ENCODE measurements at regions of chr3 and their contacts with region 1.

Region 1: DNA sequence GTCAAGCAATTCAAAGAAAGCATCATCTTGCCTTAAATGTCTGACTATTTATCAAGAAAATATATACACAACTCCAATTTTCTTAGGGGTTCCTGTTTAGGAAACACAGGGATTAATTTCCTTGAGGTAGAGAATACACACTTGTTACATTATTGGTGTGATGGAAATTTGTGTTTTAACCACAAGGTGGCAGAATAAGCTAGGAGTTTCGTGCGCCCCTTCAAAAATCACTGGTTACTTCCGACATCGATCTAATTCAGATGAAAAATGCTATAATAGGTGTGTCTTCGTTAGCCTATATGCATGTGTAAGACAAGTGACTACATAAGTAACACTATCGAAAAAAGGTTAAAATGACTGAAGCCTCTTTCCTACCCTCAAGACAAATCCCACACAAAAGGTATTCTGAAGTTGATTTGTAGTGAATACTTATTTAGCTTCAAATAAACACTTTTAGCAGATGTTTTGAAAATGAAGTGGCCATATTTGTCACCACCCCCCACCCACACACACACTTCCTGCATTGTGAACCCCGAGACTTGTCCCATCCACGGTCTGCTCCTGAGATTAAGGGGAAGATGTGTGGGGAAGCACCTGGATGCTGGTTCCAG is 246.5 kb downstream of the ROBO1 start:
- DNase-seq: peak; percentile 7
- ATAC-seq: peak; percentile 23
- H3K4me3 Mint-ChIP-seq: no peak overlapping the region
- H3K27ac Mint-ChIP-seq: no peak overlapping the region
- H3K4me1 Mint-ChIP-seq: no peaks in the 10 kb centered on the region
- H3K27me3 Mint-ChIP-seq: no peaks in the 10 kb centered on the region

Region 2: GRCh38 chr3:79810581-79810980 is 289.2 kb after region 1 on chr3:
- CTCF ChIA-PET with region 1: no interaction called
- POLR2A ChIA-PET with region 1: no interaction called
- intact Hi-C with region 1: no loop called
- DNase-seq: no peak
- ATAC-seq: no peak
- H3K4me3 Mint-ChIP-seq: no peak overlapping the region
- H3K27ac Mint-ChIP-seq: no peak overlapping the region
- H3K4me1 Mint-ChIP-seq: no peaks in the 10 kb centered on the region
- H3K27me3 Mint-ChIP-seq: no peaks in the 10 kb centered on the region

Region 3: GRCh38 chr3:79822076-79822475 is 300.7 kb after region 1 on chr3:
- CTCF ChIA-PET with region 1: no interaction called
- POLR2A ChIA-PET with region 1: no interaction called
- intact Hi-C with region 1: no loop called
- DNase-seq: no peak
- ATAC-seq: no peak
- H3K4me3 Mint-ChIP-seq: no peak overlapping the region
- H3K27ac Mint-ChIP-seq: no peak overlapping the region
- H3K4me1 Mint-ChIP-seq: no peaks in the 10 kb centered on the region
- H3K27me3 Mint-ChIP-seq: no peaks in the 10 kb centered on the region

Region 4: DNA sequence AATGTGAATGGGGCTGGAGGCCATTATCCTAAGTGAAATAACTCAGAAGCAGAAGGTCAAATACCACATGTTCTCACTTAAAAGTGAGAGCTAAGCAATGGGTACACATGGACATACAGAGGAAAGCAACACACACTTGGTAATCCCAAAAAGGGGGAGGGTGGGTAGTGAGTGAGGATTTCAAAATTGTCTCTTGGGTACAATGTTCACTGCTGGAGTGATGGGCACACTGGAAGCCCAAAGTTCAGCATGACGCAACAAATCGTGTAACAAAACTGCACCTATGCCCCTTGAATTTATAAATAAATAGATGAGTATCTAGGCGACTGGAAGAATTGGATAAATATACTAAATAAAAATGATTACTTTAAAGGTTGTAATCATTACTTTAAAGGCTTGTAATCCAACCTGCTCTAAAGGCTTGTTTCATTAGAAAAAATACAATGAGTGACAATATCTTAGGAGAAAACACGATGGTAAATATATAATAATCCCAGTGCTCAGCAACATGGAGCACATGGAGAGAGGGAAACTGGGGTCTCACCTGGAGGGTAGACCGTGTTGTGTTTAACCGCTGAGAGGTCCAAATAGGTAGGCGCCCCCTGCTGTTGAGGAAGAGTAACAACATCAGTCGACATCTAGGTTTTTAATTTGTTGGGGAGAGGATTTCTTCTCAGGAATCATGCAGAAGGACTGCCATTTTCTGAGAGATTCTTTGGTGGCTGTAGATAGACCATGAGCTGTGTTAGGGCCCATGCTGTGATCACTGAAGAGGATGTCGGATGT is 325.0 kb after region 1 on chr3:
- CTCF ChIA-PET with region 1: no interaction called
- POLR2A ChIA-PET with region 1: no interaction called
- intact Hi-C with region 1: loop called in 1 of 2 experiments (anchors 1 kb)
- DNase-seq: peak; percentile 24
- ATAC-seq: no peak
- H3K4me3 Mint-ChIP-seq: no peak overlapping the region
- H3K27ac Mint-ChIP-seq: no peak overlapping the region
- H3K4me1 Mint-ChIP-seq: no peaks in the 10 kb centered on the region
- H3K27me3 Mint-ChIP-seq: no peaks in the 10 kb centered on the region

Region 5: GRCh38 chr3:81242871-81243270 is 1721.5 kb after region 1 on chr3:
- CTCF ChIA-PET with region 1: no interaction called
- POLR2A ChIA-PET with region 1: no interaction called
- intact Hi-C with region 1: loop called in 1 of 2 experiments (anchors 5 kb)
- DNase-seq: no peak
- ATAC-seq: no peak
- H3K4me3 Mint-ChIP-seq: no peak overlapping the region
- H3K27ac Mint-ChIP-seq: no peak overlapping the region
- H3K4me1 Mint-ChIP-seq: no peaks in the 10 kb centered on the region
- H3K27me3 Mint-ChIP-seq: no peaks in the 10 kb centered on the region

Measured in activated CD4-positive, alpha-beta T cell treated with anti-CD3 and anti-CD28 coated beads for 36 hours (primary cell).